PC-9 (cell line): ENCODE measurements at regions of chr10 and their contacts with region 1.

Region 1: GRCh38 chr10:13944823-13945222 is 358.1 kb downstream of the PRPF18 start:
- DNase-seq: no peak
- H3K4me3 ChIP-seq: no peak overlapping the region
- H3K27ac ChIP-seq: no peak overlapping the region
- H3K4me1 ChIP-seq: peaks cover 28% of the 10 kb centered on the region
- H3K27me3 ChIP-seq: no peaks in the 10 kb centered on the region
- CTCF ChIP-seq: no peak

Region 2: DNA sequence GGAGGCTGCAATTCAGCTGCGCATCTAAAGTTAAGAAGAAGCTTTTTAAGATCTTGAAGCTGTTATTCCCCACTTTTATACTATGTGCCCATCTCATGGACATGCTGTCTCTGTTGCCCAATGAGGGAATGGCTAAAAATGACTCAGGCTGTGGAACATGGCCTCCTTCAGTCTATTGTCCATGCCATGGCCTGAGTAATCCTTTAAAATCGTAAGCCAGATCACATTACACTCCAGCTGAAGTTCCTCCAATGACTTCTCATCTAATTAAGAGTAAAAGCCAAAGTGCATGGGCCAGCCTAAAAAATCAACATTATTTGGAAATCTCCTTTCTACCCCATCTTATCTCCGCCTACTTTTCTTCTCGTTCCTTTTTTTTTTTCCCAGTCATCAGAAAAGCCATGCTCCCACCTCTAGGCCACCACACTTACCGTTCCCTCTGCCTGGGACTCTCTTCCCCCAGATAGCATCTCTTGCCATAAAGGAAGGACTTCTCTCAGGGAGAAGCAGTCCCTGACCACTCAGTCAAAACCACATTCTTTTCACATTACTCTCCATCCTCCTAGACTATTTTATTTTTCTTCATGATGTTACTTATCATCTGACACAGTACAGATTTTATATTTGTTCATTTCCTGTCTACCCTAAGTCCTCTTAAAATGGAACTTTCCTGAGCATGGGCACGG is 20.6 kb before region 1 on chr10:
- CTCF ChIA-PET with region 1: no interaction called
- POLR2A ChIA-PET with region 1: no interaction called
- intact Hi-C with region 1: loop called (anchors 1 kb)
- DNase-seq: peak; percentile 37 to 76
- H3K4me3 ChIP-seq: no peak overlapping the region
- H3K27ac ChIP-seq: peak overlapping the region; percentile 67
- H3K4me1 ChIP-seq: peaks cover 18% of the 10 kb centered on the region
- H3K27me3 ChIP-seq: no peaks in the 10 kb centered on the region
- CTCF ChIP-seq: no peak

Region 3: GRCh38 chr10:14153570-14154055 is 208.8 kb after region 1 on chr10:
- CTCF ChIA-PET with region 1: no interaction called
- POLR2A ChIA-PET with region 1: no interaction called
- intact Hi-C with region 1: no loop called
- DNase-seq: peak; percentile 10 to 56
- H3K4me3 ChIP-seq: peak overlapping the region; percentile 55
- H3K27ac ChIP-seq: no peak overlapping the region
- H3K4me1 ChIP-seq: 0 out of 2 replicates have a peak, but pooled peaks cover 4% of the 10 kb centered on the region
- H3K27me3 ChIP-seq: no peaks in the 10 kb centered on the region
- CTCF ChIP-seq: no peak